PC-9 (cell line): ENCODE measurements at regions of chr13 and their contacts with region 1.

Region 1: DNA sequence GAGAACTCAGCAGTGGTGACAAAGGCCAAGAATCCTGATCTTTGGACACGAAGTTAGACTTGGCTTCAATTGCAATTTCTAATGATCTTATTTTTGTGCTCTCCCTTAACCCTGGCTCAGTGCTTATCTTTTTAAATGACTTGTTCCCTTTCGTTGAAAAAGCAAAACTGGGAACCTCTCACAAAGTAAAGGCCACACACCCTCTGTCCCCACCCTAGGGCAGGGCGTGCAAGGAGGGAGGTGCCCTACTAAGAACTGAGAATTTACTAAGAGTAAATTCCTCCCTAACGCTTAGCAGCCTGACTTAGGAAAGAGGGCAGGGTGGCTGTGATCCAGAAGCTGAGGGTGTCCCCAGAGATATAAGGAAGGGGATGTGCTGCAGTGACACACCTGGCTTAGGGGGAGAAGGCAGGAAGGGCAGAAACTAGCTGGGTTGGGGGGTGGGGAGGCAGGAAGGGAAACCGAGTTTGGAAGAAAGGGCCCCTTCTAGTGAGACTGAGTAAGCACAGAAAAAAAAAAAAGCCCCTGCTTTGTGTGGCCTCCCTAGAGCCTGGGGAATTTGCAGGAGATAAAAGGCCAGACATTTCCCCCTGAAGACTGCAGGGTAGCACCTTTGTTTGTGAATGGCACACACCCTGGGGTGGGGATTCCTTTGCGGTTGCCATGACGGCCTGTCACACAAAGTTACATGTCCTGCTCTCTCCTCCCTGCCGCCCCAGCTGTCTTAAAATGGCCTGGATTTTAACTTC is 435.1 kb downstream of the EFNB2 start:
- DNase-seq: peak; percentile 85 to 86
- H3K4me3 ChIP-seq: no peak overlapping the region
- H3K27ac ChIP-seq: peak overlapping the region; percentile 58
- H3K4me1 ChIP-seq: peaks cover 73% of the 10 kb centered on the region
- H3K27me3 ChIP-seq: no peaks in the 10 kb centered on the region
- CTCF ChIP-seq: no peak

Region 2: DNA sequence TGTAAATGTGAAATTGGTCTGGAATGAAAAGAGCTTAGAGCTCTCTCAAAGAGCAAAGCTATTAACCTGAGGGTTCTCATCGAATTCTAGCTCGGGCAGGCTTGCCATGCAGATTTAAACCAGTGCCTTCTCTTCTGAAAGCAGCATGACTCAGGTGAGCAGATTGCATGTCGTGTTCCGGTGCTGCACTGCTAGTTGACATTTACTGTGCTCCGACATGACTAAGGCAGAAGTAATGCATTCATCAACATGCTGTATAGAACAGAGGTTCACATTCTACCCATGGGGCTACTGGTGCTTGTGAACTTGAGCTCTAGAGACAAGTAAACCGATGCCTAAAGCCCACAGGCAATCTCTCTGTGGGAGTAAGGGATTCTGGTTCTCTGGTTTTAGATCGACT is 512.6 kb before region 1 on chr13:
- CTCF ChIA-PET with region 1: no interaction called
- POLR2A ChIA-PET with region 1: no interaction called
- intact Hi-C with region 1: loop called (anchors 1 kb)
- DNase-seq: peak; percentile 48 to 59
- H3K4me3 ChIP-seq: no peak overlapping the region
- H3K27ac ChIP-seq: no peak overlapping the region
- H3K4me1 ChIP-seq: peaks cover 12% of the 10 kb centered on the region
- H3K27me3 ChIP-seq: no peaks in the 10 kb centered on the region
- CTCF ChIP-seq: no peak

Region 3: GRCh38 chr13:105918842-105919741 is 181.3 kb before region 1 on chr13:
- CTCF ChIA-PET with region 1: interaction called, 3 read pairs
- POLR2A ChIA-PET with region 1: no interaction called
- intact Hi-C with region 1: loop called (anchors 1 kb)
- DNase-seq: peak; percentile 79 to 98
- H3K4me3 ChIP-seq: peak overlapping the region; percentile 47
- H3K27ac ChIP-seq: peak overlapping the region; percentile 99
- H3K4me1 ChIP-seq: peaks cover 40% of the 10 kb centered on the region
- H3K27me3 ChIP-seq: no peaks in the 10 kb centered on the region
- CTCF ChIP-seq: no peak

Region 4: DNA sequence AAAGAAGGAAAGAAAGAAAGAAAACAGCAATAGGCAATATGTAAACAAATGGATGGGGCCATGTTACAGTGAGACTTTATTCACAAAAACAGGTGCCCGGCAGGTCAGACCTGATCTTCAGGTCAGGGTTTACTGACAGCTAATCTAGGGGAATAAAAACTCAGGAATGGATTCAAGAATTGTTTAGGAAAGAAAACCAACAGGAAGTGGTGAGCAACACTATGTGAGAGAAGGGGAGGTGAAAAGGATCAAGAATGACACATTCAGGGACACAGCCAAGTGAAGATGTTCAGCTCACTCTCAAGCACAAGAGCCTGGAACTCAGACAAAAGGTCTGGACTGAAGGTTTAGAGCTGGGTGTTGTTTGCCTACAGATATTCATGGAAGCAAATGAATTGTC is 190.7 kb after region 1 on chr13:
- CTCF ChIA-PET with region 1: no interaction called
- POLR2A ChIA-PET with region 1: no interaction called
- intact Hi-C with region 1: loop called (anchors 5 kb)
- DNase-seq: peak; percentile 62 to 90
- H3K4me3 ChIP-seq: no peak overlapping the region
- H3K27ac ChIP-seq: peak overlapping the region; percentile 55
- H3K4me1 ChIP-seq: peaks cover 14% of the 10 kb centered on the region
- H3K27me3 ChIP-seq: no peaks in the 10 kb centered on the region
- CTCF ChIP-seq: no peak

Region 5: DNA sequence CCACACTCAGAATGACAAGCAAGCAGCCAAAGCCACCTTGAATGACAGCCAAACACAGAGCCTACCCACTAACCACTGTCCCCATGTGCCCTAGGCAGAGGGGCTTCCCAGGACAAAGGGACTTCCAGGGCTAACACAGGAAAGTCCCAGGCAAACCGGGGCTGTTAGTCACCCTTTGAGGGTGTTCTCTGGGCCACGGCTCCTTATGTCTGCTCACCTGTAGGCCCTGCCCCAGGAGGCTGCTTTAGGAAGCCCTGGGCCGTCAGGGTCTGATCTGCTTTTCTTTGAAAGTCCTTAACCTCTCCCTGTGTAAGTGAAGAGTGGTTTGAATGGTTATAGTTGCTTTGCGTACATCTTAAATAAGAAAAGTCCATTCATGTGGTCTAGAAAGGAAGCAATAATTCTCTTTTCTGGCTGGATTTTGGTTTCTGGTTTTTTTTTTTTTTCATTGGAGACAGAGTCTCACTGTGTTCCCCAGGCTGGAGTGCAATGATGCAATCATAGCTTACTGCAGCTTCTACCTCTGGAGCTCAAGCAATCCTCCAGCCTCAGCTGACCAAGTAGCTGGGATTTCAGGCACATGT is 273.7 kb after region 1 on chr13:
- CTCF ChIA-PET with region 1: no interaction called
- POLR2A ChIA-PET with region 1: no interaction called
- intact Hi-C with region 1: loop called (anchors 1 kb)
- DNase-seq: no peak
- H3K4me3 ChIP-seq: no peak overlapping the region
- H3K27ac ChIP-seq: no peak overlapping the region
- H3K4me1 ChIP-seq: peaks cover 21% of the 10 kb centered on the region
- H3K27me3 ChIP-seq: no peaks in the 10 kb centered on the region
- CTCF ChIP-seq: no peak

Region 6: GRCh38 chr13:106520205-106521054 is 420.1 kb after region 1 on chr13:
- CTCF ChIA-PET with region 1: no interaction called
- POLR2A ChIA-PET with region 1: no interaction called
- intact Hi-C with region 1: loop called (anchors 2 kb)
- DNase-seq: no peak
- H3K4me3 ChIP-seq: peak overlapping the region; percentile 41; the same call in 1 of the 2 replicates
- H3K27ac ChIP-seq: peak overlapping the region; percentile 79
- H3K4me1 ChIP-seq: peaks cover 55% of the 10 kb centered on the region
- H3K27me3 ChIP-seq: no peaks in the 10 kb centered on the region
- CTCF ChIP-seq: peak; percentile 47